Spleen (tissue), 13 donors: ENCODE measurements at regions of chr14 and their contacts with region 1.

Region 1: GRCh38 chr14:73785873-73786695 is 65.5 kb upstream of the PTGR2 start:
- DNase-seq: peak; percentile 92
- H3K4me3 ChIP-seq: peak overlapping the region; percentile 68 to 94 (median 72)
- H3K27ac ChIP-seq: peak overlapping the region; percentile 94 to 99 (median 97)
- H3K4me1 ChIP-seq: peaks cover 47 to 94% (median 73%) of the 10 kb centered on the region in 6 donors
- H3K27me3 ChIP-seq: no peaks in the 10 kb centered on the region
- CTCF ChIP-seq: peak in 8 of 11 experiments; percentile 14 to 72 (median 54)
- POLR2A ChIP-seq: peak in 1 of 3 donors; percentile 73

Region 2: DNA sequence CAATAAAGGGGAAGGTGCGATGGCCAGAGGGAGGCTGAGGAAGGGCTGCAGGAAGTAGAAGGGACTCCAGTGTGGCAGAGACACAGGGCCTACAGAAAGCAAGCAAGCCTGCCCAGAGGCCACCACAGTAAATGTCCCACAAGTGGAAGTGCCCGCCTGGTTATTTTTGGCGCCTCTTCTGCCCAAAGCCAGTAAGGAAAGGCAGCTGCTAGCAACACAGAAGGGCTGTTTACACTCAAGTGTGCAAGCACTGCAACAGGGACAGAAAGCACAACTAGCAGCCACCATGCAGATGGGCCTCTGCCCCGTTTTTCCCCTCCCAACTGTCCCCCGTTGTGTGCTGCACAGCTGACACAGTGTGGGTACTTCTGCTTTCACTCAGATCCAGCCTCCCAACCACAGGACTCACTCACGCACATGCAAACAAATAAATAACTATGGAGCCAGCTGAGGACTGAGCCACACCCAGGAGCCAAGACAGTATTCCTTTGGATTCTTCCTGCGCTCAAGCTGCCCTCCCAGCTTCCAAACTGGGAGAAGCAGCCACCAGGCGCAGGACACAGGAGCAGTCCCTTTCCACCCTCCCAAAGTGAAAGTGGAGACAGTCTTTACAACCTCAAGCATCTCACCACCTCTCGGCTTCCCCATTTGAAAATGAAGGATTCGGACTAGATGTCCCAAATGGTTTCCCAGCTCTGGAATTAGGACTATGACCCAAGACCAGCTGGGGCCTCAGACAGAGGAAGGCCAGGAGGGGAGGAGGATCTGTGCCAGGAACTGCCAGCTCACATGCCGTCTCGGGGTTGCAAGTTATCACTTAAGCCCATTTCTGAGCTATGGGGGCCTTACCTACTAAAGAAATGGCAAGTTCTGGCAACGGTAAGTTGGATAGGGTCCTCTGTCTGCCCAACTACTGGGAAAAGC is 31.9 kb before region 1 on chr14:
- intact Hi-C with region 1: loop called (anchors 5 kb)
- DNase-seq: peak; percentile 89
- H3K4me3 ChIP-seq: peak overlapping the region; percentile 1 to 62 (median 32)
- H3K27ac ChIP-seq: peak overlapping the region; percentile 81 to 99 (median 97)
- H3K4me1 ChIP-seq: peaks cover 91 to 99% (median 98%) of the 10 kb centered on the region in 6 donors
- H3K27me3 ChIP-seq: no peaks in the 10 kb centered on the region
- CTCF ChIP-seq: no peak
- POLR2A ChIP-seq: no peak